Stomach (tissue), 19 donors: ENCODE measurements at regions of chr20 and their contacts with region 1.

Region 1: DNA sequence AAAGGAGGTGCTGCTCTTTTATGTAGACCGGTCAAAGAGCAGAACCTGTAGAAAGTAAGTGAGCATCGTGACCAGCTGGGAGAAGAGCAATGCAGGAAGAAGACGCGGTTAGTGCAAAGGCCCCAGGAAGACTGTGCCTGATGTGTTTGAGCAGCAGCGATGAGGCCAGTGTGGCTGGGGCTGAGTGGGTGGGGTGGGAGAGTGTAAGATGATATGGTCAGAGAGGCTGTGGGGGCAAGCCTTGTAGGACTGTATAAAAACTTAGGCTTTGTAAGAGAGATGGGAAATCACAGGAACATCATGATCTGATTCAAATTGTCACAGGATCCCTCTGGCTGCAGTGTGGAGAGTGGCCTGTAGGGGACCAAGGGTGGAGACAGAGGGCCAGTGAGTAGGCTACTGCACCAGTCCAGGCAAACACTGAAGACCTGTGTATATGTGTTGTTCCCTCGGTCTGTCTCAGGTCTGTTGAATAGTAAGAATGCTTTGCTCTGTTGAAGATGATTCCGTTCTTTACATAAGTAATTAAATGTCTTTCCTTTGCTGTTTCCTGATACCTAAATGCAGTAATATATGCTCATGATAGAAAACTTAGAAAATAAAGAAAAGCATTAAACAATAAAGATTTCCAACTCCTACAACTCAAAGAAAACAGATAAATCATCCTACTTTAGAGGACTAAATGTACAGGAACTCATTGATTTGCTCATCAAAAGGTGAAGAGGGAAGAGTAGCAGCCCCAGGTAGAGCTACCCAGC is 23.6 kb upstream of the WFDC2 start:
- DNase-seq: no peak
- H3K4me3 ChIP-seq: no peak overlapping the region
- H3K27ac ChIP-seq: no peak overlapping the region
- H3K4me1 ChIP-seq: peaks cover 0 to 27% (median 4%) of the 10 kb centered on the region in 4 donors
- H3K27me3 ChIP-seq: no peaks in the 10 kb centered on the region
- CTCF ChIP-seq: peak in 4 of 7 experiments; percentile 4 to 48 (median 36)
- EP300 ChIP-seq: no peak
- POLR2A ChIP-seq: no peak

Region 2: GRCh38 chr20:45318948-45319347 is 127.0 kb before region 1 on chr20:
- intact Hi-C with region 1: loop called (anchors 5 kb)
- DNase-seq: no peak
- H3K4me3 ChIP-seq: no peak overlapping the region
- H3K27ac ChIP-seq: no peak overlapping the region
- H3K4me1 ChIP-seq: peaks cover 3 to 41% (median 12%) of the 10 kb centered on the region in 4 donors
- H3K27me3 ChIP-seq: peaks cover 0 to 43% (median 19%) of the 10 kb centered on the region in 3 donors
- CTCF ChIP-seq: no peak
- EP300 ChIP-seq: no peak
- POLR2A ChIP-seq: no peak

Region 3: GRCh38 chr20:45771182-45771759 is 325.3 kb after region 1 on chr20:
- intact Hi-C with region 1: loop called (anchors 10 kb)
- DNase-seq: peak; percentile 89 to 95
- H3K4me3 ChIP-seq: no peak overlapping the region
- H3K27ac ChIP-seq: peak overlapping the region in 3 of 5 donors; percentile 21 to 69 (median 64)
- H3K4me1 ChIP-seq: peaks cover 10 to 17% (median 11%) of the 10 kb centered on the region in 4 donors
- H3K27me3 ChIP-seq: no peaks in the 10 kb centered on the region
- CTCF ChIP-seq: peak in 6 of 7 experiments; percentile 55 to 98 (median 96)
- EP300 ChIP-seq: peak; percentile 9
- POLR2A ChIP-seq: no peak